Mammary epithelial cell (primary cell): ENCODE measurements at regions of chr9 and their contacts with region 1.

Region 1: GRCh38 chr9:130088051-130088450 is 34.3 kb downstream of the GPR107 start:
- DNase-seq: no peak
- H3K4me3 ChIP-seq: no peak overlapping the region
- H3K27ac ChIP-seq: no peak overlapping the region
- H3K4me1 ChIP-seq: no peaks in the 10 kb centered on the region
- H3K27me3 ChIP-seq: no peaks in the 10 kb centered on the region
- CTCF ChIP-seq: no peak

Region 2: GRCh38 chr9:128818099-128818838 is 1269.8 kb before region 1 on chr9 and contains the start of gene ENDOG:
- CTCF ChIA-PET with region 1: no interaction called
- dilution Hi-C with region 1: no loop called
- in situ Hi-C with region 1: no loop called
- intact Hi-C with region 1: no loop called
- DNase-seq: peak; percentile 93
- H3K4me3 ChIP-seq: peak within 1 kb of the TSS; percentile 75 to 80 (median 76)
- H3K27ac ChIP-seq: peak within 1 kb of the TSS; percentile 41
- H3K4me1 ChIP-seq: peaks cover 16% of the 10 kb centered on the region
- H3K27me3 ChIP-seq: no peaks in the 10 kb centered on the region
- CTCF ChIP-seq: peak; percentile 96 to 99
- total RNA-seq, gene ENDOG: 30.8 to 40.3 TPM

Region 3: GRCh38 chr9:129919841-129920240 is 168.2 kb before region 1 on chr9:
- CTCF ChIA-PET with region 1: no interaction called
- dilution Hi-C with region 1: loop called (anchors 5 kb)
- in situ Hi-C with region 1: no loop called
- intact Hi-C with region 1: no loop called
- DNase-seq: no peak
- H3K4me3 ChIP-seq: no peak overlapping the region
- H3K27ac ChIP-seq: no peak overlapping the region
- H3K4me1 ChIP-seq: no peaks in the 10 kb centered on the region
- H3K27me3 ChIP-seq: no peaks in the 10 kb centered on the region
- CTCF ChIP-seq: no peak

Region 4: GRCh38 chr9:130058154-130058553 is 29.9 kb before region 1 on chr9:
- CTCF ChIA-PET with region 1: no interaction called
- dilution Hi-C with region 1: no loop called
- in situ Hi-C with region 1: no loop called
- intact Hi-C with region 1: no loop called
- DNase-seq: no peak
- H3K4me3 ChIP-seq: no peak overlapping the region
- H3K27ac ChIP-seq: no peak overlapping the region
- H3K4me1 ChIP-seq: peaks cover 5% of the 10 kb centered on the region
- H3K27me3 ChIP-seq: no peaks in the 10 kb centered on the region
- CTCF ChIP-seq: peak; percentile 23 to 32

Region 5: GRCh38 chr9:130186839-130187522 is 98.9 kb after region 1 on chr9:
- CTCF ChIA-PET with region 1: no interaction called
- dilution Hi-C with region 1: loop called (anchors 5 kb)
- in situ Hi-C with region 1: no loop called
- intact Hi-C with region 1: no loop called
- DNase-seq: peak; percentile 69
- H3K4me3 ChIP-seq: peak overlapping the region; percentile 2 to 50 (median 36)
- H3K27ac ChIP-seq: no peak overlapping the region
- H3K4me1 ChIP-seq: peaks cover 31% of the 10 kb centered on the region
- H3K27me3 ChIP-seq: no peaks in the 10 kb centered on the region
- CTCF ChIP-seq: peak in 1 of 2 donors; percentile 1

Region 6: GRCh38 chr9:130199605-130200004 is 111.6 kb after region 1 on chr9:
- CTCF ChIA-PET with region 1: no interaction called
- dilution Hi-C with region 1: no loop called
- in situ Hi-C with region 1: no loop called
- intact Hi-C with region 1: no loop called
- DNase-seq: peak; percentile 78
- H3K4me3 ChIP-seq: no peak overlapping the region
- H3K27ac ChIP-seq: no peak overlapping the region
- H3K4me1 ChIP-seq: peaks cover 53% of the 10 kb centered on the region
- H3K27me3 ChIP-seq: no peaks in the 10 kb centered on the region
- CTCF ChIP-seq: no peak